Right ventricle myocardium superior (tissue), 1 donor: ENCODE measurements at regions of chrX and their contacts with region 1.

Region 1: DNA sequence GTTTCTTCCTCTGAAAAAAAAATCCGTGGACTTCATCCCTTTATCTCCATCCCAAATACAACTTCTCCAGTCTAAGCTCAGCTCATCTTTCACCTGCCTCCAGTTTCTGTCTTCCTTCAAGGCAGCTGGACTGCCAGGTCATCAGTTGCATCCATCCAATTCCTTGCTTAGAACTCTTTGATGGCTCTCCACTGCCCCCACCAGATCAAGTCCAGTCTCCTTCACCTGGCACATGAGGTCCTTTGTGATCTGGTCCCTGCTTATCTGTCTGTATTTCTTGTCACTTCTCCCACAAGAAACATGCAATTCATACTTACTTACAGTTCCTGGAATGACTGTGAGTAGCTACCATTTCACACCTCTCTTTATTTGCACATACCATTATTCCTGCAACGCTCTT is 33.8 kb downstream of the OTUD6A start:
- DNase-seq: no peak
- ATAC-seq: peak; percentile 48

Region 2: DNA sequence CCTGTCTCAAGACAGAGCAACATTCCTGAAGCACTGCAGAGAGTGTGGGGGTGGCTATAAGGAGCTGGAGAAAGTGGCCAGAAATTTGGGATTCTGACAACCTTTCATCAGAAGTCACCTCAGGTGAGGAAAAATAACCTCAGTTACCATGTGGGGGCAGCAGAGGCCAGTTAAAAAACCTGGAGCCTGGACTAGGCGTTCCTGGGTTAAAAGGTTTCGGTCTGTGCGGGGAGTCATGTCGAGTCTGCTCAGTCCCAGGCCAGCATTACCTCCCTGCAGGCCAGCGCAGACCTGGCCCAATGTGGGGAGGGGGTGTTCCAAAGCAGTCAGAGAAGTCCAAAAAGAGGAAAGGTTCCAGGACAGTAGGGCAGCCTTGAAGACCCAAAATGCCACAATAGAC is 602.9 kb before region 1 on chrX:
- intact Hi-C with region 1: loop called (anchors 5 kb)
- DNase-seq: no peak
- ATAC-seq: peak; percentile 73

Region 3: DNA sequence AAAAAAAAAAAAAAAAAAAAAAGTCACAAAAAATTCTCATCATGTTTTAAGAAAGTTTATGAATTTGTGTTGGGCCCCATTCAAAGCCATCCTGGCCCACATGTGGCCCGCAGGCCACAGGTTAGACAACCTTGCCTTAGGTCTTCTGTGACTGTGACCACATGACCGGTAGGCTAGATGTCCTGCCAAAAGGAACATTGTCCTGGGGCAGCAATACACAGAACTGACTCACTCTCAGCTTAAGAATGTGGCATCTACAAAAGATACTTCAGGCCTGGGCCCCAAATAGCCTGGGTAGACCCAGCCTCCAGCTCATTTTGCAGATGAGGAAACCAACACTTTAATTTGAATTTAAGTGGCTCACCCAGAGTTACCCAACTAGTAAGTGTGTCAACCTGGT is 56.3 kb before region 1 on chrX:
- intact Hi-C with region 1: loop called (anchors 5 kb)
- DNase-seq: no peak
- ATAC-seq: no peak

Region 4: DNA sequence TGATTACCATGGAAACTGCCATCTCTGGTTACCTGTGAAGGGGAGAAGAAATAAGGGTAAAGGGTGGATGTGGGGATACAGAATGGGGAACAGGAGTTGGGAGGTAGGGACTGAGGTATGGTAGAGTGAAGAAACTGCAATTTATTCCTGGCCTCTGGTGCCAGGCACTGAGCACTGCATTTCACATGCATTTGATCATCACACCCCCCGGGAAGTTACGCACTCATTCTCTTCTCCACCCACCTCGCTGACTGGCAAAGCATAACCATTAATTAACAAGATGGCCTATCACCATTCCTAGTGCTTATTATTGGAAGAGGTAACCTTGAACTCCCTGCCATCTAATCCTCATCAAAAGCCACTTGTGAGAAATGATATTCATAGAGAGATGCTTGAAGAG is 39.8 kb before region 1 on chrX:
- intact Hi-C with region 1: no loop called
- DNase-seq: no peak
- ATAC-seq: no peak

Region 5: GRCh38 chrX:70231666-70232065 is 135.6 kb after region 1 on chrX:
- intact Hi-C with region 1: no loop called
- DNase-seq: no peak
- ATAC-seq: peak; percentile 52